Panc1 (cell line): ENCODE measurements at regions of chr10 and their contacts with region 1.

Region 1: DNA sequence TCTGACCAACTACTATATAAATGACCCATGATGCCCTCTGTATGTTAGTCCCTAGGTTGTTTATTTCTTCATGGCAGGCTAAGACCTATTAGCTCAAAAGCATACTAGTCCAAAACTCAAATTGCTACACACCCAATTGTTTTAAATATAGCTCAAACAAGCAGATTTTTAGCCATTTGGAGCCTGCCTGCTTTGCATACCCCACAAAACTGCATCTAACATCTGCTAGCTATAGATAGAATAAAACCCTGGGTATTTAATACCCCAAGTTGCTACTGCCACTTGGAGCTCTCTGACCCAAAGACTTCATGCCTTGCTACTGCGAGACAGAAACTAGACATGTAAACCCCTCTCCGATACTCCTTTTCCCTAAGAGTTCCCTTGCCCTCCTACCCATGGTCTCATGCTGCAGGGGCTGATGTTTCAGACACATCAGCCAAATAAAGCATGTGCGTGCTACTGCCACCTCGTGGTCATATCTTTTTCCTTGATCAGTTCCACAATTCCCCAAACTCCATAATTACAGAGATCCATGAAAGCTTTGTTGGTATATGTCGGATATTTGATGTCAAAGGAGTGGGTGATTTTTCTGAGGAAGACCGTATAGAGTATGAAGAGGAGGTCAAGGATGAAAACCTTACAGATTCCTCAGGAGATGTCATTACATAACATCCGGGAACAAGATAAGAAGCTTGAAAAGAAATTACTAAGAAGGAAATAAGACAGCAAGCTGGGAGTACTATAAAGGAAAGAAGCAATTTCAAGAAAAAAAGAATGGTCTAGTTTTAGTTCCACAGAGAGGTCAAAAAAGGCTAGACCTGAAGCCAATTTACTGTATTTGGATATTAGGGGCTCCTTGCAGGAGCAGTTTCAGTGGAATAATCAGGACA is 386.6 kb downstream of the SH2D4B start:
- DNase-seq: no peak
- ATAC-seq: peak; percentile 76
- H3K4me3 ChIP-seq: no peak overlapping the region
- H3K27ac ChIP-seq: no peak overlapping the region
- H3K4me1 ChIP-seq: no peaks in the 10 kb centered on the region
- H3K27me3 ChIP-seq: no peaks in the 10 kb centered on the region
- CTCF ChIP-seq: peak; percentile 83

Region 2: DNA sequence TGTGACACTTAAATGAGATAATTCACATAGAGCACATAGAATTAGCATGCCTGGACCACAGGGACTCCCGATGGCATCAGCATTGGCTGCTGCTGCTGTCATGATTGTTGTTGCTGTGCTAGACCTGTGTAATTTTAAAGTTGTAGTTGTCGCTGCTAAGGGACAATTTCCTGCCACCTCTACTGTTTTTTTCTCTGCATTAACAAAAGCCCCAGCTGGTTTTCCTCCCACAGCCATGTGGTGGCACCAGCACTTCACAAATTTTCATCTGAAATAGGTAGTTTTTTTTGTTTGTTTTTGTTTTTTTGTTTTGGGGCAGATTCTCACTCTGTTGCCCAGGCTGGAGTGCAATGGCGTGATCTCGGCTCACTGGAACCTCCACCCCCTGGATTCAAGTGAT is 541.3 kb before region 1 on chr10:
- CTCF ChIA-PET with region 1: no interaction called
- POLR2A ChIA-PET with region 1: no interaction called
- in situ Hi-C with region 1: no loop called
- intact Hi-C with region 1: no loop called
- DNase-seq: peak; percentile 15
- ATAC-seq: peak; percentile 67; the same call in 1 of the 2 replicates
- H3K4me3 ChIP-seq: no peak overlapping the region
- H3K27ac ChIP-seq: no peak overlapping the region
- H3K4me1 ChIP-seq: no peaks in the 10 kb centered on the region
- H3K27me3 ChIP-seq: peaks cover 13% of the 10 kb centered on the region; the same call in 1 of the 2 replicates
- CTCF ChIP-seq: peak; percentile 83

Region 3: DNA sequence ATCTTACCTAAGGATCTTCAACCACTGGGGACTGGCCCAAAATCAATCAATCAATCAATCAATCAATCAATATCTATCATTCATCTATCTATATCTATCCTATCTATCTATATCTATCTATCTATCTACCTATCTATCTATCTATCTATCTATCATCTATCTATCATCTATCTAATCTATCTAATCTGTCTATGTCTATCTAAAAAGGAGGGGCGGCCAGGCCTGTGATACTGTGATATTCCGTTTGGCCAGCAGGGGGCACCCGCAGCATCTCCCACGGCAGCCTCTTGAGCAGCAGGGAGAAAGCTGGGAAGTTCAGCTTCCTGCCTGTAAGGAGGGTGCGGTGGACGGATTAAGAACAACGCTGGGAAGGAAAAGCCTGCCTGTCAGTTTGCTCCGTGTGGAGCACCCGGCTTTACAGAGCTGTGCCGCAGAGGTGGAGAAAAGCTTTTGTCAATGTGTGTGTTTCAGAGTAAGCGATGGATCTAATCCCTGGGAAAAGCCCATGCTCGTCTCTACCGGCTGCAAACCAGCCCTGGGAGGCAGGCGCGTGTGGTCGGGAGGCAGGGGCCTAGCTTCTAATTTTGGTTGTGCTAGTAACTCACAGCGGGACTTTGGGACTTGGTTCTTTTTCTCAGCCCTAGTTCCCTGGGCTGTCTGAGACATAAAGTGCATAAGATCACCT is 261.6 kb before region 1 on chr10:
- CTCF ChIA-PET with region 1: interaction called, 4 read pairs
- POLR2A ChIA-PET with region 1: no interaction called
- in situ Hi-C with region 1: no loop called
- intact Hi-C with region 1: loop called (anchors 5 kb)
- DNase-seq: peak; percentile 39
- ATAC-seq: peak; percentile 94
- H3K4me3 ChIP-seq: peak overlapping the region; percentile 24 to 52
- H3K27ac ChIP-seq: peak overlapping the region; percentile 30; the same call in 1 of the 2 replicates
- H3K4me1 ChIP-seq: 0 out of 2 replicates have a peak, but pooled peaks cover 3% of the 10 kb centered on the region
- H3K27me3 ChIP-seq: no peaks in the 10 kb centered on the region
- CTCF ChIP-seq: peak; percentile 98

Region 4: GRCh38 chr10:81127931-81128330 is 203.6 kb after region 1 on chr10:
- CTCF ChIA-PET with region 1: no interaction called
- POLR2A ChIA-PET with region 1: no interaction called
- in situ Hi-C with region 1: no loop called
- intact Hi-C with region 1: no loop called
- DNase-seq: no peak
- ATAC-seq: no peak
- H3K4me3 ChIP-seq: no peak overlapping the region
- H3K27ac ChIP-seq: no peak overlapping the region
- H3K4me1 ChIP-seq: no peaks in the 10 kb centered on the region
- H3K27me3 ChIP-seq: no peaks in the 10 kb centered on the region
- CTCF ChIP-seq: no peak